ENCODE measurements at regions of chr15 and their contacts with region 1.

Region 1: GRCh38 chr15:74781431-74782258 is at the start of gene CSK:
- DNase-seq: no peak
- H3K4me3 ChIP-seq: peak within 1 kb of the TSS; percentile 78
- CTCF ChIP-seq: peak; percentile 57

Region 2: GRCh38 chr15:74615508-74616365 is 165.9 kb before region 1 on chr15 and contains the start of gene CLK3:
- CTCF ChIA-PET with region 1: interaction called, 1,672 read pairs
- POLR2A ChIA-PET with region 1: no interaction called
- DNase-seq: peak; percentile 41
- H3K4me3 ChIP-seq: peak within 1 kb of the TSS; percentile 97
- CTCF ChIP-seq: no peak

Region 3: GRCh38 chr15:74799856-74800547 is 18.4 kb after region 1 on chr15:
- CTCF ChIA-PET with region 1: interaction called, 136 read pairs
- POLR2A ChIA-PET with region 1: no interaction called
- DNase-seq: no peak
- H3K4me3 ChIP-seq: no peak overlapping the region
- CTCF ChIP-seq: peak; percentile 97

Region 4: DNA sequence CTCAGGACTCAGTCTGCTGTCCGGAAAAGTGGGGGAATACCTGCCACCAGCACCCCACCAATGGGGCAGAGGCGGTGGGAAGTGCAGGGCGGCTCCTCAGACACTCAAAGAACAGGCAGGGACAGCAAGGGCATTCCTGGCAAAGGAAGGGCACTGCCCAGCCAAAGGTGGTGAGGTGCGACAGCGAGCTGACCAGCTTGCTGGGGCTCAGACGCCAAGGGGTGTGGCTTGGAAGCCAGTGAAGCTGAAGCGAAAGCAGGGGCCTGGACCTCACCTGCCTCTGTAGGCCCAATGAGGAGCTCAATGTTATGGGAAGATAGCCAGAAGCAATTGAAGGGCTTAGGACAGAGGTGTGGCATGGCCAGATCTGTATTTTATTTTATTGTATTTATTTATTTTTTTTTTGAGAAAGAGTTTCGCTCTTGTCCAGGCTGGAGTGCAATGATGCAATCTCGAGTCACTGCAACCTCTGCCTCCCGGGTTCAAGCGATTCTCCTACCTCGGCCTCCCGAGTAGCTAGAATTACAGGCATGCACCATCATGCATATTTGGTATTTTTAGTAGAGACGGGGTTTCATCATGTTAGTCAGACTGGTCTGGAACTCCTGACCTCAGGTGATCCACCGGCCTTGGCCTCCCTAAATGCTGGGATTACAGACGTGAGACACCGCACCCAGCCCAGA is 26.6 kb after region 1 on chr15:
- CTCF ChIA-PET with region 1: interaction called, 136 read pairs
- POLR2A ChIA-PET with region 1: no interaction called
- DNase-seq: no peak
- H3K4me3 ChIP-seq: no peak overlapping the region
- CTCF ChIP-seq: no peak

Region 5: DNA sequence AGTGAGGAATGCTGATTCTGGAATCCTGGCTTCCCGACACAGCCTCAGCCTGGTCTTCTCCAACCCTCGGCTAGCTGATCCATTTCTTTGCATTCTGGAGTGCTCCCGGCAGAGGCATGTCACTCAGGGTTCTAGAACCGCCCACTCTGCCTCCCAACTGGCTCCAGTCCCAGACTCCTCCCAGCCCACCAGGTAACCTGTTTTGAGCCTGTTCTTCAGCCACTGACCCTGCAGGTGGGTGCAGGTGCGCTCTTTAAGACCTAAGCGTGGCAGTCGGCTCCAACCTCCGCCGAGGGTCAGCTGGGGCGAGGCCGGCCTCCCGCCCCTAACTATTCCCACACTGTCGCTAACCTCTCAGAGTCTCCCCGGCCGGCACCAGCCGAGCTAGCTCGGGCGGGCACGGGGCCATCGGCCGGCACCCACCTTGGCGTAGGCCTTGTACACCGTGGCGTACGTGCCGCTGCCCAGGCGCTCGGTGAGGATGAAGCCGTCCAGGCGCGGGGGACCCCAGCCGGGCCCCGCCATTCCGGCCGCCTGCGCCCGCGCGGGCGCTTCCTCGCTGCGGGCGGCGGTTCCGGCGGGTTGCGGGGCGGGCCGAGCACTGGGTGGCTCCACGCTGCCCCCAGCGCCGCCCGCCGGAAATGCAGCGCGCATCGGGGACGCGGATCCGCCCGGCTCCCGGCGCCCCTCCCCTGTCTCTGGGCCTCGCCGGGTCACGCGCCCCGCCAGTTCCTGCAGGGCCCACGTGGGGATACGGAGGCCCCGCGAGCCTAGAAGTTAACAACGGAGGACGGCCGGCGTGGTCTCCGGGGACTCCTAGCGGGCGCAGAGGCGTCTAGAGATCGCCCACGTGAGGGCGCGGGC is 61.2 kb after region 1 on chr15 and contains the start of gene ULK3:
- CTCF ChIA-PET with region 1: interaction called, 11 read pairs
- POLR2A ChIA-PET with region 1: interaction called, 4 read pairs
- DNase-seq: no peak
- H3K4me3 ChIP-seq: peak within 1 kb of the TSS; percentile 87
- CTCF ChIP-seq: peak; percentile 71

Region 6: GRCh38 chr15:74956648-74957300 is 175.1 kb after region 1 on chr15 and contains the start of gene RPP25:
- CTCF ChIA-PET with region 1: interaction called, 644 read pairs
- POLR2A ChIA-PET with region 1: no interaction called
- DNase-seq: no peak
- H3K4me3 ChIP-seq: peak within 1 kb of the TSS; percentile 56
- CTCF ChIP-seq: no peak